ENCODE measurements at regions of chr12 and their contacts with region 1.

Region 1: DNA sequence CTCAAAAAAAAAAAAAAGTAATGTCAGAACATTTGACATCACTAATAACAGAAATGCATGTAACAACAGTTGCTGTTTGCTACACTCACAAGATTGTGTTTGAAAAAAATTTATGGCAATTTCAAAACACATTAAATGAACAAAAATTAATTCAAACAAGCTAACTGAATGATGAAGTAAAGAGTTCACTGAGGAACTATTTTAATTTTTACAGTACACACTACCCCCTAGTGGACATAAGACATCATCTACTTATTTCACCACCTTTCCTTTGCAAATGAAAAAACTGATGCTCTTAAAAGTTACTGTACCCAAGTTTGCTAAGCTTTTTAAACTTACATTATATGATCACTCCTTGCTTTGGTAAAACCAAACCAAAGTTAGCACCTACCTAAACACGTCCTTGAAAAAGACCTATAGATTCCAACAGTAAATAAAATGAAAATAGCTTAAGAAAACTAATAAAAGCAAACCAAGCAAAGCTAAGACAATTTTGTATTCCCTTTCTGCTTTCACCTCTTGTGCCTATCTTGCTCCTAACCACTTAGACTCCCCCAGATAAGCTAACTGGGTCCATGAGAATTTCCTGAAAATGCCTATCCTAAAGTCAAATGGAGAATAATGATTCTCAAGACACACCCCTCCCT is 22.2 kb downstream of the UBE2N start:
- DNase-seq: no peak
- ATAC-seq: peak; percentile 62
- H3K4me3 Mint-ChIP-seq: no peak overlapping the region
- H3K27ac Mint-ChIP-seq: no peak overlapping the region
- H3K4me1 Mint-ChIP-seq: peaks cover 75% of the 10 kb centered on the region
- H3K27me3 Mint-ChIP-seq: no peaks in the 10 kb centered on the region

Region 2: GRCh38 chr12:93098077-93098476 is 321.4 kb before region 1 on chr12:
- CTCF ChIA-PET with region 1: interaction called, 31 read pairs
- POLR2A ChIA-PET with region 1: no interaction called
- DNase-seq: peak; percentile 82
- ATAC-seq: peak; percentile 84
- H3K4me3 Mint-ChIP-seq: no peak overlapping the region
- H3K27ac Mint-ChIP-seq: peak overlapping the region; percentile 31
- H3K4me1 Mint-ChIP-seq: peaks cover 17% of the 10 kb centered on the region
- H3K27me3 Mint-ChIP-seq: no peaks in the 10 kb centered on the region

Region 3: GRCh38 chr12:93237235-93237915 is 182.1 kb before region 1 on chr12:
- CTCF ChIA-PET with region 1: no interaction called
- POLR2A ChIA-PET with region 1: no interaction called
- DNase-seq: no peak
- ATAC-seq: no peak
- H3K4me3 Mint-ChIP-seq: no peak overlapping the region
- H3K27ac Mint-ChIP-seq: no peak overlapping the region
- H3K4me1 Mint-ChIP-seq: no peaks in the 10 kb centered on the region
- H3K27me3 Mint-ChIP-seq: no peaks in the 10 kb centered on the region

Region 4: GRCh38 chr12:93378373-93379325 is 40.9 kb before region 1 on chr12:
- CTCF ChIA-PET with region 1: interaction called, 23 read pairs
- POLR2A ChIA-PET with region 1: no interaction called
- DNase-seq: peak; percentile 73
- ATAC-seq: peak; percentile 59
- H3K4me3 Mint-ChIP-seq: peak overlapping the region; percentile 99
- H3K27ac Mint-ChIP-seq: peak overlapping the region; percentile 99
- H3K4me1 Mint-ChIP-seq: peaks cover 43% of the 10 kb centered on the region
- H3K27me3 Mint-ChIP-seq: no peaks in the 10 kb centered on the region

Region 5: DNA sequence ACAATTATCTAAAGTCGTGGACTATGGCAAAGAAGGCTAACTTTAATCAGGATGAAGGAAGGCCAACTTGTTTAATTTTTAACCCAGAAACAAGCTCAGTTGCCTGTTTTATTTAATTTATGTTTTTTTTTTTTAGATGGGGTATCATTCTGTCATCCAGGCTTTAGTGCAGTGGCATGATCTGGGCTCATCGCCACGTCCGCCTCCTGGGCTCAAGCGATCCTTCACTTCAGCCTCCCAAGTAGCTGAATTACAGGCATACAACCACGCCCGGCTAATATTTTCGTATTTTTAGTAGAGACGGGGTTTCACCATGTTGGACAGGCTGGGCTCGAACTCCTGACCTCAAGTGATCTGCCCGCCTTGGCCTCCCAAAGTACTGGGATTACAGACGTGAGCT is 22.1 kb before region 1 on chr12:
- CTCF ChIA-PET with region 1: interaction called, 26 read pairs
- POLR2A ChIA-PET with region 1: no interaction called
- DNase-seq: no peak
- ATAC-seq: no peak
- H3K4me3 Mint-ChIP-seq: no peak overlapping the region
- H3K27ac Mint-ChIP-seq: no peak overlapping the region
- H3K4me1 Mint-ChIP-seq: no peaks in the 10 kb centered on the region
- H3K27me3 Mint-ChIP-seq: no peaks in the 10 kb centered on the region

Region 6: GRCh38 chr12:93403988-93404803 is 15.3 kb before region 1 on chr12:
- CTCF ChIA-PET with region 1: interaction called, 43 read pairs
- POLR2A ChIA-PET with region 1: no interaction called
- DNase-seq: no peak
- ATAC-seq: no peak
- H3K4me3 Mint-ChIP-seq: no peak overlapping the region
- H3K27ac Mint-ChIP-seq: no peak overlapping the region
- H3K4me1 Mint-ChIP-seq: peaks cover 6% of the 10 kb centered on the region
- H3K27me3 Mint-ChIP-seq: no peaks in the 10 kb centered on the region

Region 7: GRCh38 chr12:93434256-93434865 is 14.8 kb after region 1 on chr12:
- CTCF ChIA-PET with region 1: interaction called, 30 read pairs
- POLR2A ChIA-PET with region 1: interaction called, 3 read pairs
- DNase-seq: no peak
- ATAC-seq: no peak
- H3K4me3 Mint-ChIP-seq: no peak overlapping the region
- H3K27ac Mint-ChIP-seq: no peak overlapping the region
- H3K4me1 Mint-ChIP-seq: peaks cover 63% of the 10 kb centered on the region
- H3K27me3 Mint-ChIP-seq: no peaks in the 10 kb centered on the region

Region 8: DNA sequence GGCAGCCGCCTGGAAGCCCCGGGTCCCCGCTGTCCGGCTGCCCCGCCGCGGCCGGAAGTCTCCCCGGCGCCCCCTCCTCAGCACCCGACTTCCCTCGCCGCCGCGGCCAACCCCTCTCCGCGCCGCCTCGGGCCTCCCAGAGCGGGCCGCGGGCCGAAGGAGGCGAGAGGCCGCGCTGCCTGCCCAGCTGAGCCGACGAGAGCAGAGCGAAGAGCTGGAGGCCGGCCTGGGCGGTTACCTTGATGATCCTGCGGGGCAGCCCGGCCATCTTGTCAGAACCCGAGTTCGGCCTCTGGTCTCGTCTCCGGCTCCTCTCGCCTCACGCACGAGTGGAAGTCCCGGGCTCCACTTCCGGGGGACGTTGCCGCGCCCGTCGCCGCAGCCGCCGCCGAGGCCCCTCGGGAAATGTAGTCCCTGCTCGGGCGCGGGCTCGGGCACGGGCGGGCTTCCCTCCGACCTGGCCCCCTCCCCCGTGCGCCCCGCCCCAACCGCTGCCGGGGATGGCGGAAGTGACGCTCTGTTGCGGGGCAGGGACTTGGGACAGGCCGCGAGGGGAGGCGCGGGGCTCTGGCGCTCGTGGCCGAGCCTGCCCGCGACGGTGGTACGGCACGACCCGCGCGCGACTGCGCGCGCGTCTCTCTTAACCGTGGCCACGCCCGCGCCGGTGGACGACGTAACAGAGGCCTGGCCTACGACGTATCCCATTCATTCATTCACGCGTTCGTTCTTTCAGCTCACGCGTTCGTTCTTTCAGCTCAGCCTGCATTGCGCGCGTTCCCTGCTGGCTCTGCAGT is 22.3 kb after region 1 on chr12 and contains the start of gene UBE2N:
- CTCF ChIA-PET with region 1: interaction called, 30 read pairs
- POLR2A ChIA-PET with region 1: interaction called, 5 read pairs
- DNase-seq: peak; percentile 96
- ATAC-seq: peak; percentile 86
- H3K4me3 Mint-ChIP-seq: peak within 1 kb of the TSS; percentile 91
- H3K27ac Mint-ChIP-seq: peak within 1 kb of the TSS; percentile 99
- H3K4me1 Mint-ChIP-seq: peaks cover 48% of the 10 kb centered on the region
- H3K27me3 Mint-ChIP-seq: no peaks in the 10 kb centered on the region
- total RNA-seq, gene UBE2N: 183 to 194 TPM